Left cardiac atrium (tissue), 4 donors: ENCODE measurements at regions of chr4 and their contacts with region 1.

Region 1: GRCh38 chr4:140012688-140013486 is 141.1 kb downstream of the MAML3 start:
- DNase-seq: peak; percentile 53
- ATAC-seq: peak; percentile 90 to 92

Region 2: GRCh38 chr4:139619644-139620043 is 393.2 kb before region 1 on chr4:
- intact Hi-C with region 1: no loop called
- DNase-seq: no peak
- ATAC-seq: no peak

Region 3: DNA sequence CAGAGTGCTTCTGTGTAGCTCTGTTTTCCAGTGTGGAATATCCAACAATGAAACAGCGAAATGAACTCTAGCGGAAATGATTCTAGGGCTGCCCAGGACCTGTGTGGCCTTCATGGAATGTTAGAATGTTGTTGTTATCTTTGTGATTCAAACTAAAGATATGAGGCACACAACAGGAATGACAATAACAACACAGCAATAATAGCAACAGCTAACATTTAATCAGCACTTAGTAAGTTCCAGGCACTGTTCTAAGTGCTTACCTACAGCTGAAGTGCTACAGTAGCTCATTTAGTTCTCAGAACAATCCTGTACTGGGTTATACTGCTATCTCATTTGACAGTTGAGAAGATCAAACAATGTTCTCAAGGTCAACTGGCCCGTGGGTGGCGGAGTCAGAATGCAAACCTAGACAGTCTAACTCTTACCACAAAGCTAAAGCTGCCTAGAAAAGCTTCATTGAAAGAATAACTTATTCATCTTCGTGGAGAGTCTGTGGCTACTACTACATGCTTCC is 77.4 kb after region 1 on chr4:
- intact Hi-C with region 1: no loop called
- DNase-seq: no peak
- ATAC-seq: no peak

Region 4: GRCh38 chr4:140326395-140326993 is 313.6 kb after region 1 on chr4:
- intact Hi-C with region 1: loop called in 1 of 2 experiments (anchors 10 kb)
- DNase-seq: peak; percentile 23
- ATAC-seq: peak; percentile 73 to 82